Activated CD4-positive, alpha-beta memory T cell treated with anti-CD3 and anti-CD28 coated beads for 36 hours (primary cell): ENCODE measurements at regions of chrX and their contacts with region 1.

Region 1: DNA sequence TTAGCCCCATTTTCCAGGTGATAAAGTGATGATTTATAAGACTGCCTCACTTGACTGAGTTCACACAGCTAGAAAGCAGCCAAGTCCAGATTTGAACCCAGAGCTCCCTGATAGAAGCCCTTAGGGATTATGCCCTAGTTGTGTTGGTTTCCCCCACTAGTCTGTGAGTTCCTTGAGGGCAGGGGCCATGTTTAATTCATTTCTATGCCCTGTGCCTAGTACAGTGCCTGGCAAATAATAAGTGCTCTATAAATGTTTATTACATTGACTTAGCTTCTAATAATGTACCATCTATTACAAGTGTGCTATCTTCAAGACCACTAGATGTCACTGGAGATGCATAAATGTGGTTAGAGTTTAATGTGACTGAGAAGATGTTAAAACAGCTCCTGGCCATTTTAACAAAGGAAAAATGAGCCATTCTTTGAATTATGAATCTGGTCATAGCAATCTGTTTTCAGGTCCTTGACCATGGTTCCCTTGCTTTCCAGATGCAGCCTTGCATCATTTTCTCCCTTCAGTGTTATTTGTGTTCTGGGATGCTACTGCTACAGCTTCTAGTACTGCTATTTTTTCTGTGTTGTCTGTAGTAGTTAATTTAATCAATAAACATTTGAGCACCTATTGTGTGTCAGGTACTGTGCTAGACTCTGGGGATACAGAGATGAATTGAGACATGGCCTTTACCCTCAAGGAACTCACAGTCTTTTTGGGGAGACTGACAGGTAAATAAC is 43.2 kb downstream of the SLC9A6 start:
- DNase-seq: no peak
- H3K4me3 Mint-ChIP-seq: no peak overlapping the region
- H3K27ac Mint-ChIP-seq: no peak overlapping the region
- H3K4me1 Mint-ChIP-seq: no peaks in the 10 kb centered on the region
- H3K27me3 Mint-ChIP-seq: no peaks in the 10 kb centered on the region

Region 2: GRCh38 chrX:135914404-135914803 is 114.0 kb before region 1 on chrX:
- CTCF ChIA-PET with region 1: no interaction called
- POLR2A ChIA-PET with region 1: no interaction called
- intact Hi-C with region 1: no loop called
- DNase-seq: no peak
- H3K4me3 Mint-ChIP-seq: no peak overlapping the region
- H3K27ac Mint-ChIP-seq: no peak overlapping the region
- H3K4me1 Mint-ChIP-seq: no peaks in the 10 kb centered on the region
- H3K27me3 Mint-ChIP-seq: no peaks in the 10 kb centered on the region

Region 3: DNA sequence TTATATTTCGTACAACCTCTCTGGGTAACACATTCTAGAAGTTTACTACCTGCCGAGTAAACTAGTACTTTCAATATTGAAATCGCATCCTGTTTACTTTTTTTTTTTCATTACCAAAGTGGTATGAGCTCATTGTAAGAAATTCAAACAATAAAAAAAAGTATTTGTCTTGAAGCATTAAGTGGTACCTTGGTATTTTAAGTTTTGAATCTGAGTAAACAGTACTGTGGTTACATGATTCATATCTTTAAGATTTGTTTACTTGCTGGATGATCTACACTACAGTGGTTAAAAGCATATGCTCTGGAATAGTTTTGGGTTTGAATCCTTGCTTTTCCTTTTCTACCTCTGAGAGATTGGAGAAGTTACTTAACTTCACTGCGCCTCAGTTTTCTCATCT is 50.8 kb before region 1 on chrX:
- CTCF ChIA-PET with region 1: no interaction called
- POLR2A ChIA-PET with region 1: no interaction called
- intact Hi-C with region 1: no loop called
- DNase-seq: no peak
- H3K4me3 Mint-ChIP-seq: no peak overlapping the region
- H3K27ac Mint-ChIP-seq: no peak overlapping the region
- H3K4me1 Mint-ChIP-seq: peaks cover 39% of the 10 kb centered on the region
- H3K27me3 Mint-ChIP-seq: no peaks in the 10 kb centered on the region

Region 4: DNA sequence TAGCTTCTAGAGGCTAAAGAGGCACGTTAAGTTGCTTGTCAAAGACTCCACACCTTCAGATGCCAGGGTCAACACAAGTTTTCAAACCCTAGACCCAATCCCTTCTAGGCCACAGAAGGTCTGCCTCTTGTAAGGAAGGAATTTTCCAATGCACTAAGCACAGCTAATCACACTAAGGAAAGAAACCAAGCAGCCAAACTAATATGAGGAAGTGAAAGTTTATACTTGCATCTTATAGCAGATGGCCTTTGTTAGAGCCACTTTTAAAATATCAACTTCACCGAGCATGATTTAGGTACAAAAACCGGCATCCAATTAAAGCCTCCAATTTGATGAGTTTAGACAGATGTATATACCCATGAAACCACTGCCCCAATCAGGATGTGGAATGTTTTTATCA is 128.8 kb after region 1 on chrX:
- CTCF ChIA-PET with region 1: interaction called, 134 read pairs
- POLR2A ChIA-PET with region 1: no interaction called
- intact Hi-C with region 1: loop called (anchors 1 kb)
- DNase-seq: no peak
- H3K4me3 Mint-ChIP-seq: no peak overlapping the region
- H3K27ac Mint-ChIP-seq: no peak overlapping the region
- H3K4me1 Mint-ChIP-seq: peaks cover 14% of the 10 kb centered on the region
- H3K27me3 Mint-ChIP-seq: no peaks in the 10 kb centered on the region

Region 5: GRCh38 chrX:136162831-136163570 is 134.6 kb after region 1 on chrX:
- CTCF ChIA-PET with region 1: interaction called, 134 read pairs
- POLR2A ChIA-PET with region 1: no interaction called
- intact Hi-C with region 1: loop called (anchors 1 kb)
- DNase-seq: peak; percentile 68
- H3K4me3 Mint-ChIP-seq: no peak overlapping the region
- H3K27ac Mint-ChIP-seq: no peak overlapping the region
- H3K4me1 Mint-ChIP-seq: no peaks in the 10 kb centered on the region
- H3K27me3 Mint-ChIP-seq: no peaks in the 10 kb centered on the region

Region 6: DNA sequence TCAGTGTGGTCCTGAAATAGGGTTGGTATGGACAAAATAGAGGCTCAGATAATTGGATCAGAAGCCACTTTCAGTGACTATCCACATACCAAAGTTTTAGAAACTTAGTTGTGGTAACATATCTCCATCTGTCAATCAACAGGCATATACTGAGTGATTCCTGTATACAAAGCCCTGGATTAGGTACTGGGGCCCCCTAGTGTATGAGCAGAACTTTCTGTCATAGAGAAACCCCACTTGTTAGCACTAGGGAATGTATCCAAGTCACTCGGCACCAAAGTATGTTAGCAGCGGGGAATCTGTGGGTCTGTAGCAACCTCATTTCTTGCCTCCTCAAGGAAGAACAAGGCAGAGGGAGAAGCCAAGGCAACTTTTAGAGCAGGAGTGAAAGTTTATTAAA is 172.0 kb after region 1 on chrX:
- CTCF ChIA-PET with region 1: interaction called, 24 read pairs
- POLR2A ChIA-PET with region 1: no interaction called
- intact Hi-C with region 1: loop called (anchors 1 kb)
- DNase-seq: peak; percentile 14
- H3K4me3 Mint-ChIP-seq: no peak overlapping the region
- H3K27ac Mint-ChIP-seq: no peak overlapping the region
- H3K4me1 Mint-ChIP-seq: peaks cover 37% of the 10 kb centered on the region
- H3K27me3 Mint-ChIP-seq: no peaks in the 10 kb centered on the region

Region 7: DNA sequence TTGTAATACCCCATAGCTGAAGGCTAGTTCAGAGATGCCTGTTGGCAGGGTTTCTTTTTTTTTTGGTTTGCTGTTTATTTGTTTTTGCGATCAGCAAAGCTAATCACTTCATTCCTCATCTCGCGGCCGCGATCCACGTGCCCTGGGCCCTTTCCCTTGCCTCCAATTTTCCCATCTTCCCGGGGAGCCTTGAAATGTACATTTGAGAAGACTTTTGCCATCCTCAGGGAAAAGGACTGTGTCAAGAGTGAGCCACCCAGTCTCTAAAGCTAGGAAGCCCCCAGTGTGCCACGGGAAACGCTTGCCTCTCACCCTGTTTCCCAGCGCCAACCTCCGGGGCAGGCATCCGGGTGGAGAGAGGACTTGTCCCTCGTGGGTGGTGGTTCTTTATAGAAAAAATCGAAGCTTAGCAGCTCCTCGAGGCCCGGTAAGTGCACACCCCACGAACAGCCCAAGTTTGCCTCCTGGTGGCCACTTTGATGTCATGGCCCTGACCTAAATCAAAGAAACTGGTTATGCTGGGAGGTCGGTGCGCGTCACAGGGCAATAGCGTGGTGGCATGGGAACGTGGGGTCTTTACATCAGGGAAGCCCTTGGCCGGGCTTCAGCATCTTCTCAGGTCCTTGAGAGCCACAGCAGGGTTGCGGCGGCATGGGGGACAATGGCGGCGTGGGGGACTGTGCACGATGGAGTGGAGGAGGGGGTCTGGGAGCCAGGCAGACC is 180.8 kb after region 1 on chrX:
- CTCF ChIA-PET with region 1: interaction called, 28 read pairs
- POLR2A ChIA-PET with region 1: no interaction called
- intact Hi-C with region 1: loop called (anchors 2 kb)
- DNase-seq: peak; percentile 40
- H3K4me3 Mint-ChIP-seq: no peak overlapping the region
- H3K27ac Mint-ChIP-seq: no peak overlapping the region
- H3K4me1 Mint-ChIP-seq: peaks cover 15% of the 10 kb centered on the region
- H3K27me3 Mint-ChIP-seq: no peaks in the 10 kb centered on the region

Region 8: GRCh38 chrX:136268051-136269048 is 239.9 kb after region 1 on chrX:
- CTCF ChIA-PET with region 1: interaction called, 41 read pairs
- POLR2A ChIA-PET with region 1: no interaction called
- intact Hi-C with region 1: loop called (anchors 1 kb)
- DNase-seq: peak; percentile 57
- H3K4me3 Mint-ChIP-seq: no peak overlapping the region
- H3K27ac Mint-ChIP-seq: no peak overlapping the region
- H3K4me1 Mint-ChIP-seq: peaks cover 4% of the 10 kb centered on the region
- H3K27me3 Mint-ChIP-seq: no peaks in the 10 kb centered on the region